ENCODE measurements at regions of chr18 and their contacts with region 1.

Region 1: DNA sequence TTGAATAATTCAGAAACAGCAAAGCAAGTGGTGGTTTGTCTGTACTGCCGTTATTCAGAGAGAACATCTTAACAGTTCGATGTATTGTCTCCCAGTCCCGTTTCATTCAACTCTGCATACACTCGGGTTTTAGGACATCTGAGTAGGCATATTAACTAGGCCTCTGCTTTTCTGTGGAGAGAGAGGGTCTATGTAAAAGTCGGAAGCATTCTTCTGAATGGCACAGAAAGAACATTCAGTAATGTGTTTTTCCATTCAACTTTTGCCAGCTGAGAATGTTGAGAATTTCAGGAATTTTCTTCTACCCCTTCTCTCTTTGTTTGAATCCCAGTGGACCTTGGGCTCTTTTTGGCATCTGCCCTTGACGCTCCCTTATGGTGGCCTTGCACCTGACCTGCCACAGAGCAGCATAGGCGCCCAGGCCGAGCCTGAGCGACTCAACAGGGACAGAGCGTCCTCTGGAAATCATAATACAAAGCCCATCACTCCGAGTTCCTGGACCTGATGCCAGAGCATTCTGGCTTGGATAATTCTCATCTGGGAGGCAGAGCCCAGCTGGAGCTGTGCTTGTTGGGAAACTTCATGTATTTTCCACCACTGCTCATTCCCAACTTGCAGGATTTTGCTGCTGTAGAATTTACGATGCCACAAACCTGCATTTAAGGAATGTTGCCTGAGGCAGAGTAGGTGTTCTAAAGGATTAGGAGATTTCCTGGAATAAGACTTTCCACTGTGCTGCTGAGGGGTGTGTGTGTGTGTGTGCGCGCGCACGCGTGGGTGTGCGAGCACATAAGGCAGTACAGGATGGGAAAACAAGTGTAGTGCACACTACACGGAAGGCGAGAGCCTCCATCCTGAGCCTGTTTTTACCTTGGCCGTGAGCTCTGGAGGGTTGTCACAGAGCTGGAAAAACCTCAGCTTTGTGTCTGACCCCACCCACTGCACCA is 77.2 kb upstream of the TXNDC2 start:
- DNase-seq: peak; percentile 89
- ATAC-seq: peak; percentile 82
- H3K4me3 ChIP-seq: peak overlapping the region in 2 of 3 experiments; percentile 6 to 32; a peak in 3 of 6 replicates
- H3K27ac ChIP-seq: peak overlapping the region; percentile 31
- H3K4me1 ChIP-seq: peaks cover 69% of the 10 kb centered on the region
- H3K27me3 ChIP-seq: no peaks in the 10 kb centered on the region; a peak in 1 of 5 replicates
- CTCF ChIP-seq: peak; percentile 16; the same call in 1 of the 2 replicates
- EP300 ChIP-seq: peak in 1 of 2 experiments; percentile 82; a peak in 2 of 4 replicates
- POLR2A ChIP-seq: no peak
- RAD21 ChIP-seq: peak; percentile 18

Region 2: GRCh38 chr18:9474983-9475642 is 333.5 kb before region 1 on chr18 and contains the start of gene RALBP1:
- CTCF ChIA-PET with region 1: no interaction called
- POLR2A ChIA-PET with region 1: no interaction called
- in situ Hi-C with region 1: no loop called
- intact Hi-C with region 1: no loop called
- DNase-seq: peak; percentile 98
- ATAC-seq: peak; percentile 95
- H3K4me3 ChIP-seq: peak within 1 kb of the TSS; percentile 83 to 93 (median 92)
- H3K27ac ChIP-seq: peak within 1 kb of the TSS; percentile 74
- H3K4me1 ChIP-seq: peaks cover 29% of the 10 kb centered on the region
- H3K27me3 ChIP-seq: no peaks in the 10 kb centered on the region; a peak in 1 of 5 replicates
- CTCF ChIP-seq: peak; percentile 60
- EP300 ChIP-seq: no peak
- POLR2A ChIP-seq: peak; percentile 78 to 98
- RAD21 ChIP-seq: peak; percentile 51; the same call in 1 of the 2 replicates
- total RNA-seq, gene RALBP1: 33.1 and 39.9 TPM in 2 replicates

Region 3: GRCh38 chr18:9771261-9771976 is 37.1 kb before region 1 on chr18:
- CTCF ChIA-PET with region 1: no interaction called
- POLR2A ChIA-PET with region 1: no interaction called
- in situ Hi-C with region 1: no loop called
- intact Hi-C with region 1: no loop called
- DNase-seq: peak; percentile 53
- ATAC-seq: peak; percentile 99
- H3K4me3 ChIP-seq: peak overlapping the region in 1 of 3 experiments; percentile 51; a peak in 2 of 6 replicates
- H3K27ac ChIP-seq: no peak overlapping the region
- H3K4me1 ChIP-seq: peaks cover 17% of the 10 kb centered on the region
- H3K27me3 ChIP-seq: peaks cover 0 to 5% of the 10 kb centered on the region in 2 experiments; a peak in 1 of 5 replicates
- CTCF ChIP-seq: peak; percentile 96
- EP300 ChIP-seq: no peak
- POLR2A ChIP-seq: no peak
- RAD21 ChIP-seq: peak; percentile 90

Region 4: GRCh38 chr18:9869715-9870430 is 61.3 kb after region 1 on chr18:
- CTCF ChIA-PET with region 1: no interaction called
- POLR2A ChIA-PET with region 1: interaction called, 18 read pairs
- in situ Hi-C with region 1: no loop called
- intact Hi-C with region 1: no loop called
- DNase-seq: peak; percentile 95
- ATAC-seq: peak; percentile 87
- H3K4me3 ChIP-seq: no peak overlapping the region
- H3K27ac ChIP-seq: peak overlapping the region; percentile 51
- H3K4me1 ChIP-seq: peaks cover 29% of the 10 kb centered on the region
- H3K27me3 ChIP-seq: no peaks in the 10 kb centered on the region; a peak in 1 of 5 replicates
- CTCF ChIP-seq: no peak
- EP300 ChIP-seq: peak; percentile 74 to 97
- POLR2A ChIP-seq: no peak
- RAD21 ChIP-seq: 0 out of 2 replicates have a peak, but pooled peaks have one; percentile 16

Region 5: DNA sequence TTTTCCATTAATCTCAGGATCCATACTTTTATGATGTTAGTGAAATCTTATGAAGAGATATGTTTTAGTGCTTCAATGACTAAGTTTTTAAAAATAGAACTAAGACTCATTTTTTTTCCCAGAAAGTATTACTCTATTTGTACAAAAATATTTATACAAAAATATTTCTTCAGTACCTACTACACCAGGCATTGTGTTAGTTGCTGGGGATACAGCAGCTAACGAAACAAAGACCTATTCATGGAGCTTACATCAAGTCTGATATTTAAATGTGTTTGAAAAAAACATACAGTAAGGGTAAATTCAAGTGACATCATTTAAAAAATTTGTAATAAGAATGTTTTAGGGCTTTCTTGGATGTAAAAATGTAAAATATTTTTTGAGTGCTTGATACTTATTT is 116.8 kb after region 1 on chr18:
- CTCF ChIA-PET with region 1: no interaction called
- POLR2A ChIA-PET with region 1: no interaction called
- in situ Hi-C with region 1: loop called (anchors 10 kb)
- intact Hi-C with region 1: loop called (anchors 2 kb)
- DNase-seq: no peak
- ATAC-seq: no peak
- H3K4me3 ChIP-seq: peak overlapping the region in 1 of 3 experiments; percentile 12; a peak in 1 of 6 replicates
- H3K27ac ChIP-seq: peak overlapping the region; percentile 45
- H3K4me1 ChIP-seq: peaks cover 79% of the 10 kb centered on the region
- H3K27me3 ChIP-seq: no peaks in the 10 kb centered on the region
- CTCF ChIP-seq: no peak
- EP300 ChIP-seq: no peak
- POLR2A ChIP-seq: no peak
- RAD21 ChIP-seq: no peak

Region 6: GRCh38 chr18:9944805-9945204 is 136.2 kb after region 1 on chr18:
- CTCF ChIA-PET with region 1: no interaction called
- POLR2A ChIA-PET with region 1: no interaction called
- in situ Hi-C with region 1: no loop called
- intact Hi-C with region 1: loop called (anchors 2 kb)
- DNase-seq: peak; percentile 52
- ATAC-seq: peak; percentile 78
- H3K4me3 ChIP-seq: no peak overlapping the region
- H3K27ac ChIP-seq: no peak overlapping the region
- H3K4me1 ChIP-seq: peaks cover 13% of the 10 kb centered on the region
- H3K27me3 ChIP-seq: no peaks in the 10 kb centered on the region
- CTCF ChIP-seq: no peak
- EP300 ChIP-seq: no peak
- POLR2A ChIP-seq: no peak
- RAD21 ChIP-seq: no peak